ENCODE measurements at regions of chr11 and their contacts with region 1.

Region 1: DNA sequence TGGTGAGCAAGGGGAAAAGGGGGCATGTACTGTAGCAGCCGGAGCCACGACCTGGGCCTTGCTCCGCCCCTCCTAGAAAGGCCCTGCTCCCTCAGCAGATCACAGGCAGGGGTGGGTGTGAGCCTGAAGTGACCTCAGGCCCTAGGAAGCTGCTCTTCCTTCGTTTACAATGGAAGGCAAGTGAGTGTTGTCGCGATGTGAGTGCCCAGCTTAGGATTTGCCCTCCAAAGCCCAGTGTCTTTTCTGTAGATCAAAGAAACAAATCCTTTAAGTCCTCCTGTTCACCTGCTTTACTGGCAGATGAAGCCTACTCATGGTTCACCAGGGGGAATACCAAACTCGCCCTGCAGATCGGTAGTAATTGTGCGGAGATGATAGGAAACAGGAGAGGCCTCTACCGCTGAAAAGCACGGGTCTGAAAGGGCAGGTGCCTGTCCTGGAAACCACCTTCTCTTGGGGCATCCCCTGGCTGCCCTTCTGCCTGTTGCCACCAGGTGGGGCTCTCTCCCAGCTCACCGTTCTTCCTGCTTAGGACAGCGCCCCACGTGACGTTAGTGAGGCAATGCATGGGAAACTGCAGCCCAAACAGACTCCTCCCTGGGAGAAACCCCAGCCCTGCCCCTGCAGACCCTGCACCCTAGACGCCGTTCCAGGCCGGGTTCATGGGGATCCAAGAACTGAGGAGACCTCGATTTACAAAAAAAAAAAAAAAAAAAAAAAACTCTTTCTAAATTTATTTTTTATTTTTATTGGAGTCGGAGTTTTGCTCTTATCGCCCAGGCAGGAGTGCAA is 45.9 kb upstream of the RAB1B start:
- DNase-seq: peak; percentile 90 to 97
- H3K4me3 ChIP-seq: no peak overlapping the region
- CTCF ChIP-seq: peak in 2 of 3 donors; percentile 35 to 99
- POLR2A ChIP-seq: no peak

Region 2: GRCh38 chr11:66288671-66289547 is 66.4 kb after region 1 on chr11 and contains the start of gene YIF1A:
- intact Hi-C with region 1: loop called (anchors 5 kb)
- DNase-seq: peak; percentile 98 to 100
- H3K4me3 ChIP-seq: peak within 1 kb of the TSS; percentile 71
- CTCF ChIP-seq: no peak
- POLR2A ChIP-seq: peak in 1 of 2 donors; percentile 42
- total RNA-seq, gene YIF1A: 55.3 to 76.2 (median 74.1) TPM

Region 3: DNA sequence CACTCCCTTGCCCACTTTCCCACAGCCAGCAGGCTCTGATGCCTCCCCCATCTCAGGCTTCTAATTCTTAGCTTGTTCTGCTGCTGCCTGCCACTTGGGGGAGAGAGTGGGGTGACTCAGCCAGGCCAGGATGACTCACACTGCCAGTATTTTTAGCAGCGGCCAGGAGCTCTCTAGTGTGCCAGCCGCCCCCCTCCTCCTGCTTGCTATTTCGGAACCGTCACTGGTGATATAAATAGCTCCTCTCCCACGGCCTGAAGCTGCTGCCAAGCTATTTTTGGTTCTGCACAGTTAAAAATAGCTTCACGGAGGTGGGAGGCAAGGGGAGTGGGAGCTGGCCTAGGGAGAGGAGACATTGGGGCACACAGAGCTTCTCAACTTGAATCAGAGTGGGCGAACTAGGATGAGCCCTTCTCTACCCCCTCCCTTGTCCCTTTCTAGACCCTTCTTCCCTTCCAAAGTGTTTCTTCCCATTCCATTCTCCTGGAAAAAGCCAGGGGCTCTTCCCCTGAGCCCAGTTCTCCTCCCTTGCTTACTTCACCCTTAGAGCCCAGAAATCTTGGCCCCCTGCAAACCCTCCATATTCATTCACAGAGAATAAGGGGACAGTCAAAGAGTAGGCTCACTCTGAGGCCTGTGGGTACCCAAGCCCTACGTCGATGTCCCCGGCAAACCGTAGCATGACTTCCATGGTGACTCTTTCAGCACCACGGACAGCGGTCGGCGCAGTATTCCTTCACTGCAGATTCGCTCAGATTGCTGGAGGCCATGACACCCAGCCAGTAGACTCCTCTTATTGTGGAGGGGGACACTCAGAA is 195.8 kb after region 1 on chr11:
- intact Hi-C with region 1: no loop called
- DNase-seq: peak; percentile 31 to 89
- H3K4me3 ChIP-seq: no peak overlapping the region
- CTCF ChIP-seq: no peak
- POLR2A ChIP-seq: no peak